Posterior cingulate gyrus (tissue), 11 donors: ENCODE measurements at regions of chr1 and their contacts with region 1.

Region 1: GRCh38 chr1:15885701-15886610 is 38.4 kb downstream of the SPEN start:
- DNase-seq: peak; percentile 90 to 99 (median 96)

Region 2: DNA sequence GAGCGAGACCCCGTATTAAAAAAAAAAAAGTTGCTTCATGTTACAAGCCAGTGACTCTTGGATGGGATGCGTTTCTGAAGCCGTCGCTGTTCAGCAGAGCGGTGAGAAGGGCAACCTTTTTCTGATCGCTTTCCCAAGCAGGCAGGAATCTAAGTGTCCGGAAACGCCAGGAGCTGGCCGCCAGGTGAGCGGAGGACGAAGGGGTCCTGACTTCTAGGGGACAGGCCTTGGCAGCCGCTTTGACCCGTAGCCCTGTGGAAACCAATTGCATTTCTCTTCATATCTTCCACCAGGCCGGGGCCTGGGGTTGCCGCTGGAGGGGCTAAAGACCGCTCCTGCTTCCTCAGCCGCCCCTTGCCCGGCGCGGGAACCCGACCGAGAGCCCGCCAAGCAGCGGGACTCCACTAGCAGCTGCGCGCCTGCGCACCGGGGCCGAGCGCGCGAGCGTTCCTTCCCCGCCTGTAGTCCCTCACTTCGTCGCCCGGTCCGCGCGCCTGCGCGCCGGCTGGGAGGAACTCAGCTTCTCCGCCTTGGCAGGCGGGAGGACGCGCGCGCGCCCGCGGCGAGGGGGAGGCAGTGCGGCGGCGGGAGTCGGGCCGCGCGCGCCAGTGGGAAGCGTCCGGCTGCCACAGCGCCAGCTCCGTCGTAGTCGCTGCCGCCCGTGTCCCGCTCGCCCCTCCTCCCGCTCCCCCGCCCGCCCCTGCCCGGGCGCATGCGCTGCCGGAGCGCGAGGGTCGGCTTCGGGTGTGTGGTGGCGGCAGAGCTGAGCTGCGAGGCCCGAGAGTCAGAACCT is 38.7 kb before region 1 on chr1 and contains the start of gene SPEN:
- intact Hi-C with region 1: loop called (anchors 1 kb)
- DNase-seq: peak; percentile 92 to 100 (median 98)

Region 3: DNA sequence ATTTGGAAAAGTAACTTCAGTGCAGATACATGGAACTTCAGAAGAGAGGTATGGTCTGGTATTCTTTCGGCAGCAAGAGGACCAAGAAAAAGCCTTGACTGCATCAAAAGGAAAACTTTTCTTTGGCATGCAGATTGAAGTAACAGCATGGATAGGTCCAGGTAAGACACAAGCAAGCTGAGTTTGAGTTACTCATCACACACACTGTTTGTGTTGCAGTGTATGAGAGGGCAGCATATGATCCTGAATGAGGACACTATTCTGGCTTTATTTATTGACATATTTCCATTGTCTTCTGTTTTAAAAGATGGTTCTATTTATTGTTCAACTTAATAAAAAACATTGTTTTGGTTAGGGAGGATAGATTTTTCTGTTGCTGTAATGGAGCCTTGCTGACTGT is 25.2 kb after region 1 on chr1:
- intact Hi-C with region 1: no loop called
- DNase-seq: no peak